A549 (cell line): ENCODE measurements at regions of chr9 and their contacts with region 1.

Region 1: DNA sequence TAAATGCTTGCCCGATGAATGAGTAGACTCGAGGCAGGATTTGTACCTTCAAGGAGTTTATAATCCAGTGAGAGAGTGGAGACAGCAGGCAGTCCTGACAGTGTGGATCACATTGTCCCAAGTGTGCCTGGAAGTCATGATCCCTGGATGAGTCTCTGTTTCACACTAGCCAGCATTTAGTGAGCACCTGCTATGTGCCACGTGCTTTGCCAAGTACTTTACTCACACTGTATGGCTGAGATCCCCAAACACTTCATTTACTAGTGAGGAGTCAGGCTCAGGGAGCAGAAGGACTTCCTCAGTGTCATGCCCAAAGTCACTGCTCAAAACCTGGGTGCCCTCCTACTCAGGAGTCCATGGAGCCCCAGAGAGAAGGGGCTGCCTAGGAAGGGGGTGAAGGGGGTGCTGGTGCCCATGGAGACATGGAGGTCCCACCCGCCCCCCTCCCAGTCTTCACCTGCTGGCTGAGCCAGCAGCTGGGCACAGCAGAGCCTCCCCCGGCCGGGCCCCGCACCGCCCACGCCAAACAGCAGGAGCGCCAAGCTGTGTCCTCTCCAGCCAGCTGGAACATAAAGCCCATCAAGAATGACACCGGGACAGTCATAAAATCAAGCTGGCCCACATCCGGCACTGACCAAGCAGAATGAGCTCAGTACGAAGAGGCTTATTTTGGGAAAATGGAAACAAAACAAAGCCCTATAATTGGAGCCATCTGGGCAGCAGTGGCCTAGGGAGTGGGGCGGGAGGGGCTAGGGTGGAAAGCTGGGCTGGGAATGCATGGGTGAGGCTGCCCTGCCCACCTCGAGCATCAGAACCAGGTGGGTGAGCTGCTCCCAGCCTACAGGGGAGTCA is 10.6 kb downstream of the LAMC3 start:
- DNase-seq: no peak
- ATAC-seq: no peak
- H3K4me3 ChIP-seq: no peak overlapping the region
- H3K27ac ChIP-seq: no peak overlapping the region
- H3K4me1 ChIP-seq: no peaks in the 10 kb centered on the region
- CTCF ChIP-seq: no peak
- EP300 ChIP-seq: no peak
- POLR2A ChIP-seq: no peak
- RAD21 ChIP-seq: no peak

Region 2: DNA sequence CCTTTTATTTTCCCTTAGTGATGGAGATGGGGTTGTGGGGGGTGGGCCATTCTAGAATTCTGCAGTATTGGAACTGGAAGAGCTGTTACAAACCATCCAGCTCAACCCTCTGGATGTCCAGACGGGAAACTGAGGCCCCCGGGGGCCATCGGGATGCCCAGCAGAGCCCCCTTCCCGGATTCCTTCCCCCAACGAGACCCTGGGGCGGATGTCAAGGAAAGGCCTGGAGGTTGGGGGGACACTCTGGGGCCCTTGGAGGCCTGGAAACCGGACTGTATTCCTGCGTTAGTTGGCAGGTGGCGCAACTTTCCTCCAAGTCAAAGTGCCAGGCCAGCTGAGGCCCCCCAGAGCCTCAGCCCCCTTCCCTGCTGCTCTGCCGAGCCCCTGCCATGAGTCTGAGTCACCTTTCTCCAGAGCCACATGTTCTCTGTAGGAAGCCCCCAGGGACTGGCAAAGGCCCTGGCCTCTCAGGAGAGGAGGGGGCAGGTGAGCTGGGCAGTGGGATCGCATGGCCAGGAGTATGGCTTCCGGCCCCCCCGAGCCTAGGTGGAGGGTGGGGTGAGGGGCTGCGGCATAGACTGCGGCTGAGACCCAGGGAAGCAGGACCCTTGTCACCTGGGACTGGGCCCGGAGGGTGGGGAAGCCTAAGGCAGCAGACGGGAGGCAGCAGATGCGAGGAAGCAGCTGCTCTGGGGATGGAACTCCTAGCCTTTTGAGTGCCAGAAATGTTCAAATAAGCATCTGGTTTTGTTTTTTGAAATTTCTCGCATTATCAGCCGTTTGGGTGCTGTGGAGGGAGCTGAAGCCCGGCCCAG is 62.8 kb before region 1 on chr9:
- CTCF ChIA-PET with region 1: no interaction called
- POLR2A ChIA-PET with region 1: no interaction called
- DNase-seq: no peak
- ATAC-seq: no peak
- H3K4me3 ChIP-seq: no peak overlapping the region
- H3K27ac ChIP-seq: no peak overlapping the region
- H3K4me1 ChIP-seq: peaks cover 2% of the 10 kb centered on the region
- CTCF ChIP-seq: no peak
- EP300 ChIP-seq: no peak
- POLR2A ChIP-seq: no peak
- RAD21 ChIP-seq: no peak

Region 3: GRCh38 chr9:131008909-131009618 is 10.6 kb before region 1 on chr9 and contains the start of gene LAMC3:
- CTCF ChIA-PET with region 1: interaction called, 20 read pairs
- POLR2A ChIA-PET with region 1: interaction called, 7 read pairs
- DNase-seq: peak; percentile 52 to 65
- ATAC-seq: peak; percentile 82 to 87
- H3K4me3 ChIP-seq: peak within 1 kb of the TSS; percentile 54
- H3K27ac ChIP-seq: peak within 1 kb of the TSS; percentile 56 to 82; a peak in 5 of 6 replicates
- H3K4me1 ChIP-seq: peaks cover 4% of the 10 kb centered on the region; the same call in 1 of the 3 replicates
- CTCF ChIP-seq: peak; percentile 50
- EP300 ChIP-seq: no peak
- POLR2A ChIP-seq: no peak
- RAD21 ChIP-seq: peak; percentile 44 to 69; a peak in 4 of 5 replicates
- polyA plus RNA-seq, gene LAMC3: 1.0 TPM in 2 replicates